ENCODE measurements at regions of chr7 and their contacts with region 1.

Region 1: DNA sequence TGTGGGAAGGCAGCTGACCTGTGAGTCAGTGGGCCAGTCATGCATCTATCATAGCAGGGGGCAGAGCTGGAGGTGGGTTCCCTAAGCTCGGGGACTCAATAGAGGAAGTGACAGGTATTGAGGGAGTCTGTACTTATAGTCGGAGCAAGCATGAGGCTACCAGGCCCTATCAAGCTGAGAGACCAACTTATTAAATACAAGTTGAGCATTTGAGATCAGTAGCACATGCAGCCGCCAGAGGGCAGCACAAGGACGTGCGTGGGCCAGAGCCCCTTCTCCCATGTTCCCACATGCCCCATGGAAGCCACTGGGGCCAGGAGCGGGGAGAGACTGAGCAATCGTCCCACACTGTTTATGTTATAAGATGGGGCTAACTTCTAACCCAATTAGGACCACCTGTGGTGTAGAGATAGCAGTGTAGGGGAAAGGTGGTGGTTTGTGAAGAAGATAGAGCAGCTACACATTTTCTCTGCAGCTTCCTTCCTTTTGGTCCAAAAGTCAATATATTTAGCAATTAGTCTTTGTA is 13.0 kb upstream of the STK31 start:
- DNase-seq: peak; percentile 72
- H3K4me3 Mint-ChIP-seq: no peak overlapping the region
- H3K27ac Mint-ChIP-seq: no peak overlapping the region
- H3K4me1 Mint-ChIP-seq: peaks cover 8% of the 10 kb centered on the region
- H3K27me3 Mint-ChIP-seq: no peaks in the 10 kb centered on the region
- CTCF ChIP-seq: peak; percentile 68

Region 2: DNA sequence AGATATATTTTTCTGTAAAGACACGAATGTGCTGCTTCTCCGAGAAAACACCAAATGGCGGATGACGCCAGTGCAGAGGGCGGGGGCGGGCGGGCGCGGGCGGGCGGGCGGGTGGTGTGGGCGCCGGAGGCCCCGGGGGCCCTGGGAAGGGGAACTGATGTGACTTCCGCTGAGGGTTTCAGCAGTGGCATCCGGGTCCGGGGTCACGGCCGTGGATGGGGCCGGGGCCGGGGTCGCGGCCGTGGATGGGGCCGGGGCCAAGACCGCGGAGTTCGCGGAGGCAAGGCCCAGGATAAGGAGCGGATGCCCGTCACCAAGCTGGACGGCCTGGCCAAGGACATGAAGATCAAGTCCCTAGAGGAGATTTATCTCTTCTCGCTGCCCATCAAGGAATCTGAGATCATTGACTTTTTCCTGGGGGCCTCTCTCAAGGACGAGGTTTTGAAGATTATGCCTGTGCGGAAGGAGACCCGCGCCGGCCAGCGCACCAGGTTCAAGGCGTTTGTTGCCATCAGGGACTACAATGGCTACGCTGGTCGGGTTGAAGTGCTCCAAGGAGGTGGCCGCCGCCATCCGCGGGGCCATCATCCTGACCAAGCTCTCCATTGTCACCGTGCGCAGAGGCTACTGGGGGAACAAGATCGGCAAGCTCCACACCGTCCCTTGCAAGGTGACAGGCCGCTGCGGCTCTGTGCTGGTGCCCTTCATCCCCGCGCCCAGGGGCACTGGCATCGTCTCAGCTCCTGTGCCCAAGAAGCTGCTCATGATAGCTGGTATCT is 206.4 kb before region 1 on chr7:
- CTCF ChIA-PET with region 1: no interaction called
- POLR2A ChIA-PET with region 1: no interaction called
- intact Hi-C with region 1: no loop called
- DNase-seq: no peak
- H3K4me3 Mint-ChIP-seq: no peak overlapping the region
- H3K27ac Mint-ChIP-seq: no peak overlapping the region
- H3K4me1 Mint-ChIP-seq: no peaks in the 10 kb centered on the region
- H3K27me3 Mint-ChIP-seq: no peaks in the 10 kb centered on the region
- CTCF ChIP-seq: no peak

Region 3: DNA sequence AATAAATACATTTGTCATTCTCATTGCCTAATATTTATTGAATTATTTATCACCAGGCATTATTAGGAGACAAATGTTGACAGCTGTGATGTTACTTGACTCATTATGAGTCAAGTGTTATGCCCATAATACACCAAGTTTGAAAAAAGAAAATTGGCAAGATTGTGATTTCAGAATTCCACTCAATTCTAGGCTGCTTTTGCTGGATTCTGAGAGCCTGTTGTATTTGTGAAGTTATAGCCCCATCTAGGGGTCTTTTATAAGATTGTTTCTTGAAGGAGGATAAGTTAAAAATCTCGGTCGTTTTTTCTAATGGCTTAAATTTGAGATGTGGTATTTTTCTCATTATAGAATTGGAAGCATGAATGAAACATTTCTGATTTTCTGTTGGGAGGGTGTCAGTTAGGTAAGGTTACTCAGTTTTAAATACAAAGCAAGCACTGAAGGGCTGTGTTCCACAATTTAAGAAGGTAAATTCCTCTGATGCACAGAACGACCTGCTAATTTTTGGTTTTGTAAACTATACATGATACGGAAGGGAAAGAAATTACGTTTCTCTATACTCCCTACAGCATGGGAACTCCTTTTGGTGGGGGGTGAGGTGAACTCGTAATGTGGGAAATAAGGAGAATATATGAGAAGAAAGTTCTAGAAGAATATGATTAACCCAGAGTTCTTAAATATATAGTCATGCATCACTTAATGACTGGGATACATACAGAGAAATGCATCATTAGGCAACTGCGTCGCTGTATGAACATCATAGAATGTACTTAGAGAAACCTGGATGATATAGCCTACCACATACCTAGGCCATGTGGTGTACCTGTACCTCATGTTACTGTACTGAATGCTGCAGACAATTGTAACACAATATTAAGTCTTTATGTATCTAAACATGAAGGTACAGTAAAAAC is 15.6 kb after region 1 on chr7:
- CTCF ChIA-PET with region 1: interaction called, 16 read pairs
- POLR2A ChIA-PET with region 1: interaction called, 3 read pairs
- intact Hi-C with region 1: no loop called
- DNase-seq: peak; percentile 69
- H3K4me3 Mint-ChIP-seq: no peak overlapping the region
- H3K27ac Mint-ChIP-seq: peak overlapping the region; percentile 27
- H3K4me1 Mint-ChIP-seq: peaks cover 17% of the 10 kb centered on the region
- H3K27me3 Mint-ChIP-seq: no peaks in the 10 kb centered on the region
- CTCF ChIP-seq: peak; percentile 52

Region 4: GRCh38 chr7:24036042-24036412 is 339.0 kb after region 1 on chr7:
- CTCF ChIA-PET with region 1: no interaction called
- POLR2A ChIA-PET with region 1: no interaction called
- intact Hi-C with region 1: no loop called
- DNase-seq: no peak
- H3K4me3 Mint-ChIP-seq: no peak overlapping the region
- H3K27ac Mint-ChIP-seq: no peak overlapping the region
- H3K4me1 Mint-ChIP-seq: peaks cover 9% of the 10 kb centered on the region
- H3K27me3 Mint-ChIP-seq: no peaks in the 10 kb centered on the region
- CTCF ChIP-seq: no peak